ENCODE measurements at regions of chr3 and their contacts with region 1.

Region 1: DNA sequence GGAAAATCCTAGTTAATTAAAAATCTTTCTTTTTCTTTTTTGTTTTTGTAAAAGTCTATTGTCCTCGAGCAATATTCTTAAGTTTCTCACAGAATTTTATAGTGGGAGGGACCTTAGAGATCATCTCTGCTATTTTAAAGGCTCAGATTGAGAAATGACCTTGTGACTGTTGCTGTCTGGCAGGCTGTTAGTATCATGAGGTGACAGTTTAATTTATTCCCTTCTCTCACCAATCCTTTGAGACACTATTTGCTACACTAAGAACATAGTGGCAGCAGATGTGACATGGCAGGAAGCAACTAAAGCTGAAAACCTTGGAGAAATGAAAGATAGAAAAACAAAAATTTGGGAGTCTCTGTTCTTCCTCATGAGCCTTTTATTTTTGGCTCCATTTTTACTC is 24.9 kb downstream of the APPL1 start:
- DNase-seq: peak in 1 of 2 donors; percentile 46
- H3K4me3 ChIP-seq: no peak overlapping the region
- CTCF ChIP-seq: no peak
- POLR2A ChIP-seq: no peak

Region 2: GRCh38 chr3:57221883-57222282 is 30.5 kb before region 1 on chr3:
- intact Hi-C with region 1: loop called (anchors 2 kb)
- DNase-seq: no peak
- H3K4me3 ChIP-seq: no peak overlapping the region
- CTCF ChIP-seq: no peak
- POLR2A ChIP-seq: no peak